CD4-positive, alpha-beta memory T cell (primary cell): ENCODE measurements at regions of chr6 and their contacts with region 1.

Region 1: DNA sequence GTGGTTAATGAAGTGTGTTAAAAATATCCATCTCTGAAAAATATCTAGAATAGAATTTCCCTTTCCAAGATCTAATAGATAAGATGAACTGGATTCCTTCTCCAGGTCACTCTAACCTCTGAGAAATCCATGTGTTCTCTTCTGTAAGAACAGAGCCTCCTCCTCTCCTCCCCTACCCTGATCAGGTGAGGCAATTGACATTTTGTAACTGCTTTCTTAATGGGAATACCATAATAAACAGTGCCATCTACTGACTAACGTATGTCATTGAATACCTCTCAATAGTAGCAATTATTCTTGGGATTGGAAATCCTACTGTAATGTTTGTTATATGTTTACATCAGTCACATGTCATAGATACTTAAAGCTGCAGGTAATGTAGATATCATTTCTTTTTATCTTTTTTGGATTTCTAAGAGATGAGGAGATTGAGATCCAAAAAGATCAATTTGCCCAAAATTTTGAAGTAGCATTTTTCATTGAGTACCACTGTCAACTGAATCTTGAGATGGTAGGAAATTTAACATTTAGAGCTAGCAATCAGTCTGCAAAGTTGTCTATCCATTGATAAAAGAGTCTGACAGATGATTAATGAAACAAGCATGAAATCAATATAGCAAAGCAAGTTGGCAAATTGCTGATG is 365.8 kb upstream of the HSF2 start:
- DNase-seq: peak in 4 of 5 donors; percentile 10 to 28 (median 18)
- H3K4me3 ChIP-seq: no peak overlapping the region
- H3K4me3 Mint-ChIP-seq: no peak overlapping the region
- H3K27ac ChIP-seq: no peak overlapping the region
- H3K27ac Mint-ChIP-seq: no peak overlapping the region
- H3K4me1 ChIP-seq: no peaks in the 10 kb centered on the region
- H3K4me1 Mint-ChIP-seq: no peaks in the 10 kb centered on the region
- H3K27me3 ChIP-seq: no peaks in the 10 kb centered on the region
- H3K27me3 Mint-ChIP-seq: peaks cover 0 to 2% of the 10 kb centered on the region in 2 donors

Region 2: DNA sequence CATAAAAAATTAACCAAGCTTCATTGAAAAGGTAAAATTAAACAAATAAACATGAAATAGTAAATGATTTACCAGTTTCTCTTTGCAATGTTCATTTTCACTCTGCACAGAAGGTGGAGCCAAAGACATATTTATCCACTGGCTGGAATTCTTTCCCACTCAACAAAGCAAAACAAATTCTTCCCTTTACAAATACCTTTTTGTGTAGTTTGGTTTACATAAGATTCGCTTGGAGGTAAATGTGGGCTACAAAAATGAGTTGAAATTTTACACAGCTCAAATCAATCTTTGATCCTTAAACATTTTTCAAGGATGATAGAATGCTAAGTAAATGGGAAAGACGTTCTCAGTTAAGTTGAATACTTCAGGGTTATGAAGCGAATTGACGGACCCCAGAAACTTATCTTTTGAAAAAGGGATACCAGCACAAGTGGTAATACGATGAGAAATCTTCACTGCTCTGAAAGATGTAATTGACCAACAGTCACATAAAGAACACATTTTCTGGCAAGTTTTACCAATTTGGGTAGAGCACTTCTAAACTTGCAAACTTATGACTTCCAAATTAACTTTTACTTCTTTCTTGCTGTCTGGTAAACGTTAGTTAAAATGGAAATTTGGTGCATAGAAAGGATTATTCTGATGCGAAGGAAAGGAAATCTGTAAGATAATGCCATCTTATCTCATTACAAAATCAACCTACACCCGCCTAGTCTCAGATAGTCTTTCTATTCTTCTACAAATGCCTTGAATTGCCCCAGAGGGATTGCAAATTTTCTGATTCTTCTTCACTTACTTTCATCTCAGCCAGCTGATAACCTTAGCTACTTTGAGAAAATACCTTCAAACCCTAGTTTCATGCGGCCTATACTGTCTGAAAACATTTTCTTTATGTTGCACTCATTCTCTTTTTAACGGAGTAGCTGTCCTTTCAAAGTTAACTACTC is 602.9 kb before region 1 on chr6:
- CTCF ChIA-PET with region 1: no interaction called
- POLR2A ChIA-PET with region 1: no interaction called
- intact Hi-C with region 1: loop called (anchors 2 kb)
- DNase-seq: no peak
- H3K4me3 ChIP-seq: no peak overlapping the region
- H3K4me3 Mint-ChIP-seq: no peak overlapping the region
- H3K27ac ChIP-seq: no peak overlapping the region
- H3K27ac Mint-ChIP-seq: no peak overlapping the region
- H3K4me1 ChIP-seq: no peaks in the 10 kb centered on the region
- H3K4me1 Mint-ChIP-seq: peaks cover 0 to 1% (median 0%) of the 10 kb centered on the region in 4 donors
- H3K27me3 ChIP-seq: peaks cover 5% of the 10 kb centered on the region
- H3K27me3 Mint-ChIP-seq: peaks cover 1 to 6% of the 10 kb centered on the region in 2 donors